Heart right ventricle (tissue), 16 donors: ENCODE measurements at regions of chr9 and their contacts with region 1.

Region 1: DNA sequence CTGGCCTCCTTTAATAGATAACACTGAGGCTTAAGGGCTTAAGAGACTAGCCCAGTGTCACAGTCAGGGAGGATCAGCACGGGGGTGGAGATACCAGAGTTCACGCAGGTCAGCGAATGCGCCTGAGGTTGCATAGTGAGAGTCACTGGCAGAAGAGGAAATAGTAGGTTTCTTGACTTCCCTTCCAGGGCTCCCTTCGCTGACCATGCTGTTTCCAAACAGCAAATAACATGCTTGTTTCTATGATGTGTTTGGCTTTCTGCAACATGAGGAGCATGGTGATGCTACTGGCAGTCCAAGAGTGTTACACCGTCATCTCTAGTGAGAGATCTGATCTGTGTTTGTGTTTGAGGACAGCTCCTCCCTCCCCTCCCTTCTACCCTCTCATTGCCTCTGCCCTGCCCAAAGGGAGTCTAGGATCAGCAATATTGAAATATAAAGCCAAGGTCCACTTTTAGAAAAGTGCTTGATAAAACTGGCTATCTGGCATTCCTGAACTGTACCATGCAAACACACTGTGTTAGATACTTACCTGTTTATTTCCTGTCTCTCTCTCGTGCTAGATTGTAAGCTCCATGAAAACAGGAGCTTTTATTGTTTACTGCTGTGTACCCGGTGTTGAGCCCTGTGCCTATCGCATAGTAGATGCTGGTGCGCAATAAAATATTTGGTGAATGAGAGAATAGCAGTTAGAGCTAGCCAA is 12.3 kb downstream of the TLE4 start:
- DNase-seq: peak; percentile 18 to 22
- ATAC-seq: peak; percentile 26 to 82 (median 72)
- H3K4me3 ChIP-seq: peak overlapping the region in 1 of 10 donors; percentile 7
- H3K27ac ChIP-seq: peak overlapping the region in 2 of 10 donors; percentile 22 to 73
- H3K4me1 ChIP-seq: peaks cover 4 to 74% (median 42%) of the 10 kb centered on the region in 9 donors
- H3K27me3 ChIP-seq: no peaks in the 10 kb centered on the region
- CTCF ChIP-seq: no peak

Region 2: GRCh38 chr9:79360387-79361347 is 223.4 kb before region 1 on chr9:
- intact Hi-C with region 1: no loop called
- DNase-seq: no peak
- ATAC-seq: no peak
- H3K4me3 ChIP-seq: no peak overlapping the region
- H3K27ac ChIP-seq: no peak overlapping the region
- H3K4me1 ChIP-seq: peaks cover 0 to 19% (median 0%) of the 10 kb centered on the region in 9 donors
- H3K27me3 ChIP-seq: peaks cover 0 to 7% (median 0%) of the 10 kb centered on the region in 7 donors
- CTCF ChIP-seq: no peak

Region 3: DNA sequence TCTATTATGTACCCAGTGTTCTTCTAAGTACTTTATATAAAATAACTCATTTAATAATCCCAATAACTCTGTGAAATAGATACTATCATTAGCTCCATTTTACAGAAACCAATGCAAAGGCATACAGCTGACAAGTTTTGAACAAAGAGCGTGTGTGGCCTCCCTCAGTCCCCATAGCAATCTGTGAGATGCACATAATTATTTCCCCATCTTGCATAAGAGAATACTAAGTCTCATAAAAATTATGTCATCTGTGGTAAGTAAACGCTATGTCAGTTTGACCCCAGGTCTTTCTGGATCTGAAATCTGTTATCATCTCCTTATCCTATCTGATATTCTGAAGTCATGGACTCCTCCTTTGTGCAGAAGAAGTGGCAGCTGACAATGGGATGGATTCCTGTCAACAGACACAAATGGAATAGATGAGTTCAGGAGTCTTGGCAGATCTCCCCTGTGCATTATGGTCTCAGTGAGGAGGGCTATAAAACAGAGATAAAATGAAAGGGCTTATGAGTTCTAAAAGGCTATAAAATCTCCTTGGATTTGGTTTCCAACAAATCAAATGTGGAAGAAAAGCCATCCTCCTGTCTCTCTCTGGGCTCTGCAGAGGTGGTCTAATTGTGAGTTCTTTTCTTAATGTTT is 174.8 kb before region 1 on chr9:
- intact Hi-C with region 1: no loop called
- DNase-seq: no peak
- ATAC-seq: no peak
- H3K4me3 ChIP-seq: no peak overlapping the region
- H3K27ac ChIP-seq: no peak overlapping the region
- H3K4me1 ChIP-seq: no peaks in the 10 kb centered on the region
- H3K27me3 ChIP-seq: no peaks in the 10 kb centered on the region
- CTCF ChIP-seq: no peak

Region 4: GRCh38 chr9:79617395-79617794 is 33.3 kb after region 1 on chr9:
- intact Hi-C with region 1: loop called in 3 of 10 experiments (anchors 1 to 5 kb)
- DNase-seq: peak in 1 of 2 donors; percentile 22
- ATAC-seq: peak in 4 of 8 donors; percentile 39 to 61 (median 51)
- H3K4me3 ChIP-seq: no peak overlapping the region
- H3K27ac ChIP-seq: no peak overlapping the region
- H3K4me1 ChIP-seq: peaks cover 0 to 36% (median 28%) of the 10 kb centered on the region in 9 donors
- H3K27me3 ChIP-seq: no peaks in the 10 kb centered on the region
- CTCF ChIP-seq: no peak

Region 5: GRCh38 chr9:79623799-79624721 is 40.0 kb after region 1 on chr9:
- intact Hi-C with region 1: loop called in 2 of 10 experiments (anchors 5 kb)
- DNase-seq: peak; percentile 19 to 49
- ATAC-seq: peak; percentile 59 to 91 (median 88)
- H3K4me3 ChIP-seq: peak overlapping the region in 1 of 10 donors; percentile 13
- H3K27ac ChIP-seq: peak overlapping the region in 8 of 10 donors; percentile 5 to 76 (median 30)
- H3K4me1 ChIP-seq: peaks cover 0 to 30% (median 20%) of the 10 kb centered on the region in 9 donors
- H3K27me3 ChIP-seq: no peaks in the 10 kb centered on the region
- CTCF ChIP-seq: no peak

Region 6: DNA sequence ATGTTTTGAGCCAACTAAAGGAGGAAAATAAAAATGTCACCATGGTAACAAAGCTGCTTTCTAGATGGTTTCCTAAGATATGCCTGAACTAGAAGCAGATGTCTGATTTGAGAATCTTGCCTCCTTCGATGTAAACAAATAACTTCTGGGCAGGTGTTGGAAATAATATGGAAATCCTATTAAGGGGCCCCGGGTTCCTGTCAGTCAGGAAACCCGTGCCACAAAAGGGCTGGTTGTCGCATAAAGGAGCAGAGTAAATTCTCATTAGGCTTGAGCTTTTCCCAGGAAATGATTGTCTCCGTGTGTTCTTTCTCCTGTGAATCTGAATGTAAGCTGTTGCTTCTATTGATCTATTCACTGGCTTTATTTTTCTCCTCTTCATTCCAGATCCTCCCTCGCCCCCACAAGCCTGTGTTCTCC is 78.4 kb after region 1 on chr9:
- intact Hi-C with region 1: loop called in 4 of 10 experiments (anchors 2 to 10 kb)
- DNase-seq: no peak
- ATAC-seq: peak in 3 of 8 donors; percentile 21 to 53 (median 45)
- H3K4me3 ChIP-seq: peak overlapping the region in 1 of 10 donors; percentile 12
- H3K27ac ChIP-seq: peak overlapping the region in 5 of 10 donors; percentile 3 to 43 (median 31)
- H3K4me1 ChIP-seq: peaks cover 0 to 43% (median 35%) of the 10 kb centered on the region in 9 donors
- H3K27me3 ChIP-seq: no peaks in the 10 kb centered on the region
- CTCF ChIP-seq: no peak